ENCODE measurements at regions of chr7 and their contacts with region 1.

Region 1: DNA sequence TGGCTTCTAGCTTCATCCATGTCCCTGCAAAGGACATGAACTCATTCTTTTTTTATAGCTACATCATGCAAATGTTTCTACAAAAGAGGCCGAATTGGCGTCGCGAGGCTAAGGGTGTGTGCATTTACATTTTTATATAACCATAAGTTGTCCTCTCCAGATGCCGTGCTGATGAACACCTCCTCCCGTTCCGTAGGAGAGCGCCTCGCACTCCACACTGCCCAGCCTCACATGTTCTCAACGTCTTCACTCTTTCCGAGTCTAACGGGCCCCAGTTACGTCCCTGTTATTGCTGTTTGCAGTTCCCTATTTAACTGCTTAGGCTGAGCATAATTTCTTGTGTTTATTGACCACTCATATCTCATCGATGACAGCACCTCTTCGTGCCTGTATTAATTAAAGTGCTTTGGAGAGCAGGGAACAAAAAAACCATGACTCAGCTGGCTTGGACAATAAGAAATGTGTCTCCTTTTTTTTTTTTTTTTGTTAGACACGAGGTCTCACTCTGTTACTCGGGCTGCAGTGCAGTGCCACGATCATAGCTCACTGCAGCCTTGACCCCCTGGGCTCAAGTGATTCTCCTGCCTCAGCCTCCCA is 113.5 kb upstream of the SDK1 start:
- DNase-seq: no peak
- H3K4me3 Mint-ChIP-seq: no peak overlapping the region
- H3K27ac Mint-ChIP-seq: no peak overlapping the region
- H3K4me1 Mint-ChIP-seq: no peaks in the 10 kb centered on the region
- H3K27me3 Mint-ChIP-seq: no peaks in the 10 kb centered on the region

Region 2: DNA sequence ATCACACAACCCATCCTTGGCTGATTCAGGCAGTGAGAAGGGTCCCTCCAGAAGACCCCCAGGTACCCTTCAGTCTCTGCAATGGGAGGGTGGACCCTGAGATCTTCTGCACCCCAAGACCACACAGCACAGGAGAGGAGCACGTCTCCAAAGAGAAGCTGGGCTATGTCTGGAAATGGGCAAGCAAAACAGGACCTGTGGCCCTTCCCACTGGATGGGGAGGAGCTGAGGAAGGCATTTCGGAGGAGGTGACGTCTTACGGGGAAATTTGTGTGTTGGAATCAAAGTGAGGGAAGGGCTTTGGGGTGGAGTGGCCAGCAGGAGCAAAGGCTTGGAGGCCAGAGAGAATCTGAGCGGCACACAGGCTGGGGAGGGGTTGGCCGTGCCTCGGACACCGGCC is 727.9 kb before region 1 on chr7:
- CTCF ChIA-PET with region 1: interaction called, 10 read pairs
- intact Hi-C with region 1: no loop called
- DNase-seq: no peak
- H3K4me3 Mint-ChIP-seq: no peak overlapping the region
- H3K27ac Mint-ChIP-seq: no peak overlapping the region
- H3K4me1 Mint-ChIP-seq: no peaks in the 10 kb centered on the region
- H3K27me3 Mint-ChIP-seq: no peaks in the 10 kb centered on the region